A549 (cell line): ENCODE measurements at regions of chr1 and their contacts with region 1.

Region 1: DNA sequence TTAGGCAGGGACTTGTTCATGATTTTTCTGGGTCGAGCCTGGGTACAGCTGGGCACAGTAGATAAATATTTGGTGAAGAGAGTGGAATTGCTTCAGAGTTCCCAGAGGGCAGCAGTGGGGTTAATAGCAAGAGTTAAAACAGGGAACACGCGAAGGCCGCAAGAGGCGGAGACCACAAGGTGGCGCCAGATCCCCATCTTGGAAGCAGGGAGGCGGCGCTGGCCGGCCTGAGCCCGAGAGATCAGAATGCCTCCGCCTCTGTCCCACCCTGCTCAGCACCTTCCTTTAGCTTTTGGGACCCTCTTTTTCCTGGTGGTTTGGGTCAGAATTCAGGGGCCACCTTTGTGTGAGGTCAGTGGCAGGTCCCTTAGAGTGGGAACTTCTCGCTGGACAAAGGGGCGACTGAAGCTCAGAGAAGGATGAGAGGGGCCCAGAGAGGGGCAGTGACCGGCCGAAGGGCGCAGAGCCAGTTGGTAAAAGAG is 6.5 kb upstream of the PADI2 start:
- DNase-seq: peak; percentile 79 to 87
- ATAC-seq: peak; percentile 90 to 92
- H3K4me3 ChIP-seq: no peak overlapping the region
- H3K27ac ChIP-seq: peak overlapping the region; percentile 85 to 95
- H3K4me1 ChIP-seq: peaks cover 51% of the 10 kb centered on the region
- CTCF ChIP-seq: peak; percentile 92
- EP300 ChIP-seq: no peak
- POLR2A ChIP-seq: no peak
- RAD21 ChIP-seq: peak; percentile 97 to 99

Region 2: DNA sequence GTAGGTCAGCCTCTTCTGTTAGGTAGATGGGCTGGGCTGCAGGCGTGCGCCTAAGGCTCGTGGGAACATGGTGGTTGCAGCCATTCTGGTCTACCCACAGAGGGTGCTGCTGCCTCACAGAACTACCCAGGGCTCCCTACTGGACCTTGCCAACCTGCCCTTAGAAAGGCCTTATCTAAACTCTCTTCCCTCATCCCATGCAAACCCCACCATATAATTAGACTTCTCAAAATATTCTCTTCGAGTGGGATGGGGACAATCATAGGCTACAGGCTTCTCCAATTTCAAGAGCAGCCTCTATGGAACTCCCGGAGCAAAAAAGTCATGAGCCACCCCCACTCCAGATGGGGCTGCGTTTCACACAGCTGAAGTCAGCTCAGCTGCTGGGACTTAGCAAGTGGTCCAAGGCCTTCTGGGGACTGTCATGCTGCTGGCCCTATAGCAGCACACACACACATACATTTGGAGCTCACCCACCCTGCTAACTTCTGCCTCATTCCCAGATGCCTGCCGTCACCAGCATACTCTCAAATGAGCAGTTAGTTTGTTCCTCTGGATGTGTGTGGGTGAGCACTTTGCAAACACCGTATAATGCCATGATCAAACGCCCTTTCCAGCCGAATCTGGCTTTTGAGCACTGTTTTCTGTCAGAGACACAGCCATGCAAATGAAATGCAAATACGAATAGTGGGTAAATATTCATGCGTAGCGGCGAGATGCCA is 65.9 kb before region 1 on chr1:
- CTCF ChIA-PET with region 1: interaction called, 14 read pairs
- POLR2A ChIA-PET with region 1: no interaction called
- DNase-seq: peak; percentile 72 to 73
- ATAC-seq: peak; percentile 99
- H3K4me3 ChIP-seq: no peak overlapping the region
- H3K27ac ChIP-seq: peak overlapping the region in 1 of 2 experiments; percentile 14; a peak in 1 of 6 replicates
- H3K4me1 ChIP-seq: no peaks in the 10 kb centered on the region
- CTCF ChIP-seq: peak; percentile 74
- EP300 ChIP-seq: no peak
- POLR2A ChIP-seq: no peak
- RAD21 ChIP-seq: peak; percentile 88 to 91

Region 3: GRCh38 chr1:17198476-17199258 is 72.9 kb after region 1 on chr1:
- CTCF ChIA-PET with region 1: interaction called, 11 read pairs
- POLR2A ChIA-PET with region 1: interaction called, 3 read pairs
- DNase-seq: no peak
- ATAC-seq: no peak
- H3K4me3 ChIP-seq: no peak overlapping the region
- H3K27ac ChIP-seq: peak overlapping the region; percentile 11 to 93; a peak in 3 of 6 replicates
- H3K4me1 ChIP-seq: peaks cover 32% of the 10 kb centered on the region
- CTCF ChIP-seq: no peak
- EP300 ChIP-seq: no peak
- POLR2A ChIP-seq: no peak
- RAD21 ChIP-seq: no peak

Region 4: DNA sequence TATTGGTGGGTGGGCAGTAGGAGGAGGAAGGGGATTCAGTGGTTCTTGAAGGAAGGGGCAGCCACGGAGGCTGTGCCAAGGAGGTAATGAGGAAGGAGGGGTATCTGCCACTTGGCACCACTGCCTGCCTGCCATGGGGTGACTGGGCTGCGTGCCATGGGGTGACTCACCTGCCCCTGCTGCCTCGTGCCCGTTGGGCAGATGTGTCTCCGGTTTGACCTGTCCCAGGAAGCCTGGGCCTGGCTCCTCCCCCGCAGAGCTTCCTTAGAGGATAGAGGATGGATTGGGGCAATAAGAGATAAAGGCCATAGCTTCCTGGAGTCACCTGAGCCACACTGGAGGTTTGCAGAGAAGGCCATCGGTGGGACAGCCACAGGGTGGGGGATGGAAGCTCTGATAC is 124.8 kb after region 1 on chr1:
- CTCF ChIA-PET with region 1: interaction called, 29 read pairs
- POLR2A ChIA-PET with region 1: interaction called, 3 read pairs
- DNase-seq: peak; percentile 80 to 82
- ATAC-seq: peak; percentile 86 to 89
- H3K4me3 ChIP-seq: no peak overlapping the region
- H3K27ac ChIP-seq: peak overlapping the region; percentile 92 to 97
- H3K4me1 ChIP-seq: peaks cover 30% of the 10 kb centered on the region
- CTCF ChIP-seq: no peak
- EP300 ChIP-seq: peak in 1 of 2 experiments; percentile 37; a peak in 2 of 5 replicates
- POLR2A ChIP-seq: no peak
- RAD21 ChIP-seq: no peak

Region 5: DNA sequence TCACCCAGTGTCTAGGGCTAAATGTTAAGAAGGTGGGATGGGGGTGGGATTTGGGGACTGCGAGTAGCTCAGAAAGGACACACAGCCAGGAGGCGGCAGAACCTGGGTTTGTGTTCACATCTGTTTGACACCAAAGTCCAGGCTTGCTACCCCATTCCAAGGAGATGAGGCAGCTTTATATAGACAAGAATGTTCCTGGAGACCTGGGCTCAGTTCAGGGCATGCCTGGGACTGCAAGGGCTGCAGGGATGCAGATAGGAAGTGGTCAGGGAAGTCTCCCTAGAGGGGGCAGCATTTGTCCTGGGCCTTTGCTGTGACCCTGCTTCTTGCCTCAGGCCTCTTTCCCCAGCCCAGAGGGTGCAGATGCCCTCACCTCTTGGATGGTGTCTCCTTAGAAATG is 139.4 kb after region 1 on chr1:
- CTCF ChIA-PET with region 1: interaction called, 21 read pairs
- POLR2A ChIA-PET with region 1: no interaction called
- DNase-seq: peak in 1 of 2 experiments; percentile 26
- ATAC-seq: peak; percentile 59 to 78; a peak in 5 of 6 replicates
- H3K4me3 ChIP-seq: no peak overlapping the region
- H3K27ac ChIP-seq: peak overlapping the region in 1 of 2 experiments; percentile 73; a peak in 3 of 6 replicates
- H3K4me1 ChIP-seq: peaks cover 4% of the 10 kb centered on the region; the same call in 1 of the 3 replicates
- CTCF ChIP-seq: no peak
- EP300 ChIP-seq: no peak
- POLR2A ChIP-seq: no peak
- RAD21 ChIP-seq: no peak

Region 6: DNA sequence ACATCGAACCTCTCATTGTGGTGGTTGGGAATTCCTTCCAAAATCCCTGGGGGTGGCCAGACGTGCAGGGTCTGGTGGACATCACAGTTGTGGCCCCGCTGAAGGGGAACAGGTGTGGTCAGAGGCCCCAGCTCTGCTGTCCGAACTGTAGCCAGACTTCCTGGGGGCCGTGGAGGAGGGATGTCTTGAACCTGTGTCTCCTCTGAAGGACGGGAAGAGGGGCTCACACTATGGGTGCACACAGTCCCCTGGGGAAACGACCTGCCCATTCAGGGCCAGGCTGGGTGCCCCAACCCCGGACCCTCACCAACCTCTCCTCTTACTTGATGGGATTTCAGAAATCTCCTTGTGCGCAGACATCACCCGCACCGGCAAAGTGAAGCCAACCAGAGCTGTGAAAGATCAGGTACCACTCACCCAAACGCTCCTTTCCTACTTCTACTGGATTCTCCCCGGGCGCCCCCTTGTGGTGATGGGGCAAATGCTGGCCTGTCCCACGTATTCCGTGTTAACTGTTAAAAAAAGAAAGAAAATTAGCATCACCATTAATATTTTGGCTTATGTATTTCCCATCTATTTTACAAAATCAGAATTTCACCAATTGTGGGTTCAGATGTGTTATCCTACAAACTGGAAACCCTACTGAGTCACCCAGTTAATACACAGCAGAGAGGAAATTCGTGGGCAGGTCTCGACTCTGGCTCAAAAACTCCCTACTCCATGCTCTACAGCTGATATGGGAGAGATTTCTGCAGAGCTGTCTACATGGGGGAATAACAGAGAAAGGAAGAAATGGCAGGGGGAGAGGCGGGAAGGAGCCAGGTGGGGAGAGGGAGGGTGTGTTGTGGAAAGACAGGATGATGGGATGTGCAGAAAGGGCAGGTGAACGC is 210.3 kb after region 1 on chr1:
- CTCF ChIA-PET with region 1: interaction called, 52 read pairs
- POLR2A ChIA-PET with region 1: no interaction called
- DNase-seq: peak; percentile 40 to 56
- ATAC-seq: peak; percentile 95 to 97
- H3K4me3 ChIP-seq: no peak overlapping the region
- H3K27ac ChIP-seq: peak overlapping the region; percentile 23 to 79; a peak in 5 of 6 replicates
- H3K4me1 ChIP-seq: no peaks in the 10 kb centered on the region
- CTCF ChIP-seq: peak; percentile 76
- EP300 ChIP-seq: no peak
- POLR2A ChIP-seq: no peak
- RAD21 ChIP-seq: peak; percentile 78 to 82